Posterior cingulate gyrus (tissue), 11 donors: ENCODE measurements at regions of chr10 and their contacts with region 1.

Region 1: GRCh38 chr10:92517034-92517655 is 56.7 kb downstream of the IDE start:
- DNase-seq: peak in 5 of 10 donors; percentile 19 to 76 (median 59)

Region 2: DNA sequence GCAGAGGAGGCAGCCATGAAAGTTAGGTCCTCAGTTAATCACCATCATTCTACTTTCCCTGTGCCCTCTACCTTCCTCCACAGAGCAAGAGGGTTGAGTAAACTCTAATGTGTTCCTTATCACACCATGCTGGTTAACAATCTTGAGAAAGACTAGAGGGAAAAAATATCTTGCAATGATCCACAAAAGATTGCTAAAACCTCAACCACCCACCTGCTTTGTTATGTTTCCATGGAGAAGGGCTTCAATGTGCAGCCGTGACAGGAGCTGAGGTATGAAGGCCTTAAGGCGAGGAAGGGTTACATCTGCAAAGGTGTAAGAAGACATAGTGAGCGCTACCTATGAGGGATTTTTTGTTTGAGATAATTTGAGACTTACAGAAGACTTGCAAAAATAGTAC is 47.1 kb before region 1 on chr10:
- intact Hi-C with region 1: no loop called
- DNase-seq: no peak

Region 3: DNA sequence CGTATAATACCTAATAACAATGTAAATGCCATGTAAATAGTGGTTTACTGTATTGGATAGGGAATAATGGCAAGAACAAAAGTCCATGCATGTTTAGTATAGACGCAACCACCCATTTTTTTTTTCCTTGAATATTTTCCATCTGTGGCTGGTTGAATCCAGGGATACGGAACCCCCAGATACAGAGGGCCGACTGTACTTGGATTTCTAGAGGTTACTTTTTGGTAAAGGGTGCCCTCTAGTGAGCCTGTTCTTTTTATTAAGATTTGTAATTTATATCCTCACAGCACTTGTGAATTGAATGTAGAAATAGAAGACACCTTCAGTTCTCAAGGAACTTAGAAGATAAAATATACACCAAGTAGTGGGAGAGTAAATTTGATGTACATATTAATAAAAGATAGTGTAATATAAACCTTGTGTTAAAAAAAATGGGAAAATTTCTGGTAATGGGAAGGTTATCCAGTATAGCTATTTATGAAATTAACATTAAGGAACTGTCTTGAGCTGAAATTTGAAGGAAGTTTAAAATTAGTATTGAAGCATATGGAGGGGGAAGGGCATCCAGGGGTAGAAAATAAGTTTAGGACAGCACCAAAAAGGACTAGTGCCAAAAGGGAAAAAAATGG is 363.2 kb after region 1 on chr10:
- intact Hi-C with region 1: loop called (anchors 2 kb)
- DNase-seq: no peak